AG04450 (cell line): ENCODE measurements at regions of chr17 and their contacts with region 1.

Region 1: GRCh38 chr17:45172454-45173286 is 11.0 kb downstream of the HEXIM2 start:
- DNase-seq: no peak
- H3K4me3 ChIP-seq: 0 out of 2 replicates have a peak overlapping the region, but pooled peaks have one; percentile 10
- H3K27ac ChIP-seq: peak overlapping the region; percentile 75
- H3K27me3 ChIP-seq: no peaks in the 10 kb centered on the region
- CTCF ChIP-seq: no peak

Region 2: DNA sequence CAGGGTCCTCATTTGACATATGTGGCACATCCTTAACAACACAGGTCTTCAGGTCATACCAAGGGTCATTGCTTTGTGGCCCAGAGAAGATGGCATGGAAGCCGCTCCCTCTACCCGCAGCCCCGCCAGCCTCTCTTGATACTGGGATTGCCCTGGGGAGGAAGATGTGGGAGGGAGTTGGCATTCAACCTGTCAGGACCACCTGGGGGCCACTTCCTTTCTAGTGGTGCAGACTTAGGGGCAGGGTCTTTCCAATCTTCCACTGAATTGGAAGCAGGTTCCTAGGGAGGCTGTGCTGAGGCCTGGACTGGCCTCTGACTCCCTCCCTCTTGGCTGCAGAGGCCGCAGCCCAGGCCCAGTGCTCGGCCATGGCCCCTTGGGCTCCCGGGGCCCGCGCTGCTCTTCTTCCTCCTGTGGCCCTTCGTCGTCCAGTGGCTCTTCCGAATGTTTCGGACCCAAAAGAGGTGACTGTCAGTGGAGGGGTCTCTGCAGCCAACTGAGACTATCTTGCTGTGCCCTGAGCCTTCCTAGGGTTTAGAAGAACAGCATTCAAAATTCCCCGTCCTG is 29.5 kb before region 1 on chr17:
- CTCF ChIA-PET with region 1: interaction called, 6 read pairs
- POLR2A ChIA-PET with region 1: interaction called, 73 read pairs
- DNase-seq: no peak
- H3K4me3 ChIP-seq: no peak overlapping the region
- H3K27ac ChIP-seq: peak overlapping the region; percentile 93
- H3K27me3 ChIP-seq: no peaks in the 10 kb centered on the region
- CTCF ChIP-seq: no peak

Region 3: DNA sequence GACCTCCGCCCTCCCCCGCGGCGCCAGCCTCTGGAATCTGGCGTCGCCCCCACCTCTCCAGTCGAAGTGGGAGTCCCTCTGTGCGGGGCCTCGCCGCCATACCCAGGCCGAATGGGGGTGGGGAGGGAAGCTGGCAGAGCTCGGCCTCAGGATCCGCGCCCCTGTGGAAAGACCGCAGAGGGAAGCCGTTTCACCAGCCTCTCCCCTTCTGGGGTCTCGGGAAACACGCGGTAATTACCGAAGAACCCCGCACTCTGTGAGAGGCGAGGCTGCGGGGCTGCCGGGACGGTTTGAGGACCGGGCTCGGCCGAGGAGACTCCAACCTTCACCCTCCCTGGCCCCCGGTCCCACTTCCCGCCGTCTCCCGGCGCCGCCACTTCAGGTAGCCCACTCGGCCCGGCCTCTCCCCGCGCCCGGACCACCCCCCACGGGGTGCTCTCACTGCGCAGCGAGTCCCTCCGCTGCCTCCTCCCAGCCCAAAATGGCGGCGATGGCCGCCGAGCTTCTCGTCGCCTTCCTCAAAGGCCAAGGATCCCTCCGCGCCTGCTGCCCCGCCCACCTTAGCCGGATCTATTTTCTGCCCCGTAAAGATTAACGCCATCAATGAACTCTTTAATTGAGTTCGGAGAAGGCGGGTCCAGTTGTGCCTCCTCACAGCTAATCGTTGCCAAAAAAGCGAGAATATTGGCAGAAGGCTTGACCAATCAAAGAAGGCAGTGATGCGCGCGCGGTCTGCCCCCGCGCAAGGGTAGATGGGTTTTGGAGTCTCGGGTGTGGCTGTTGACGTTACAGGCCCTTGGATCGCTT is 11.4 kb before region 1 on chr17:
- CTCF ChIA-PET with region 1: interaction called, 3 read pairs
- POLR2A ChIA-PET with region 1: interaction called, 34 read pairs
- DNase-seq: peak; percentile 100
- H3K4me3 ChIP-seq: peak overlapping the region; percentile 90
- H3K27ac ChIP-seq: peak overlapping the region; percentile 97
- H3K27me3 ChIP-seq: no peaks in the 10 kb centered on the region
- CTCF ChIP-seq: no peak

Region 4: DNA sequence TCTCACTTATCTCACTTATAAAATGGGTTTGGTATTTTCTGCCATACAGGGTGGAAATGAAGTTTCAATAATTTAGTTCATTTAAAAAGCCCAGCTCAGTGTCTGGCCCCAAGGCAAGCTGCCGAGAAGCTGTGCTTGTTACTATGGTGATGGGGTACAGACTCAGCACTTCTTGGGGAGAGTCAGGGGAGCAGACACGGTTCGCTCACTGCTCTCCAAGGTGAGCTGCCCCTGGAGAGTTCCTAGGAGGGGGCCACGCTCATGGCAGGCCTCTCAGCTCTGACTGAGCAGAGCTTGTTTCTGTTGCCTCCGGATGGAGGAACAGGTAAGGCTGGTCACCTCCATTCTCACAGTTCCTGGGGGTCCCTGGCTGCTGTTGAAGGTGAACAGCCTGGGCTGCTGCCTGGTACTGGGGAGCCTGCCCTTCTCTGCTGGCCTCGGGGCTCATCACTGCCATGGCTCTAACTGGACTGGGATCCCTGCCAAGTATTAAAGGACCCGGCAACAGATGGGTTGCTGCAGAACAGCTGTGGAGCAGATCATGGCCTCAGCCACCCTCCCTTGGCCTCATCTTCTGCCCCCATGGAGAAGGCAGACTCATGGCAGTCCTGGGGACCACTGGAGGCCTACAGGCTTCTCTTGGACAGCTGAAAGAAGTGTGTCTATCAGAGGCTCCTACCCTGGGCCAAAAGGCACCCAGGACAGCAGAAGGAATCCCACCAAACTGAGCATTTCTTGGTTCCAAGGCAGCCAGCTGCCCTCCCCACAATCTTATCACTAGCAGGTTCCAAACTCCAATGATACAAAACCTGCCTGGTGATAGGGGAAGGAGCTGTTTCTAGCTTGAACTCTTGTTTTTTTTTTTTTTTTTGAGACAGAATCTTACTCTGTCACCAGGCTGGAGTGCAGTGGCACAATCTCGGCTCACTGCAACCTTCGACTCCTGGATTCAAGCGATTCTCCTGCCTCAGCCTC is 115.1 kb after region 1 on chr17:
- CTCF ChIA-PET with region 1: no interaction called
- POLR2A ChIA-PET with region 1: no interaction called
- DNase-seq: no peak
- H3K4me3 ChIP-seq: no peak overlapping the region
- H3K27ac ChIP-seq: no peak overlapping the region
- H3K27me3 ChIP-seq: no peaks in the 10 kb centered on the region
- CTCF ChIP-seq: no peak